ENCODE measurements at regions of chr5 and their contacts with region 1.

Region 1: DNA sequence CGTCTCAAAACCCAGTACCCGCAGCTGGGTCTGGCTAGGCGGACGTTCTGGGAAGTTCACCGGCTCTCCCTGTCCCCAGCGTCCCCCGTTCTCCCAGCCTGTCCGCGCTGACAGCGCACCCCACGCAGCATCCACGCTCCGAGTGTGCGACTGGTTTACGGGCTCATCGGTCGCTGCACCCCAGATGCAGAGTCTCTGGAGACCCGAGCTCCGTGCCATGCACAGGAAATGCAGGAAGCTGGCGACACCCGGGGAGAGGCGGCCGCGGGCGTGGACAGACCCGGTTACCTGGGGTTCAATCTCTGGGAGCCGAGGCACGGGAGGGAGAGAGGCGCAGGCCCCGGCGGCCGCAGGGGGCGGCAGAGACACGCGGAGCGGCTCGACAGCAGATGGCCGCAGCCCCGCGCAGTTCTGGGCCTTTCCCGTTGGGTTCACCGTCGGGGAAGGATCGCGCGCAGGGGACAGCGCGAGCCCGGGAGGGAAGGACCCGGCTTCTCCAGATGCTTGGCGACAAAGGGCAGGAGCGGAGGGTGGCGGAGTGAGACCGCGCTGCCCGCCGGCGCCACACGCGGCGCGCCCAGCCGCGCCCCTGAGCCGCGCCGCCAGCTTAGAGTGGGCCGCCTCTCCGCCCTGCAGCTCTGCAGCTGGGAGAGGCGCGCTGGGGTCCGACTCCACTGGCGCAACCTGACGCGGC is 558 bp downstream of the SHROOM1 start:
- DNase-seq: peak; percentile 67
- H3K4me3 ChIP-seq: peak overlapping the region; percentile 44 to 74 (median 71)
- H3K27ac ChIP-seq: no peak overlapping the region
- H3K4me1 ChIP-seq: peaks cover 5% of the 10 kb centered on the region
- H3K27me3 ChIP-seq: no peaks in the 10 kb centered on the region
- CTCF ChIP-seq: peak; percentile 77 to 97

Region 2: DNA sequence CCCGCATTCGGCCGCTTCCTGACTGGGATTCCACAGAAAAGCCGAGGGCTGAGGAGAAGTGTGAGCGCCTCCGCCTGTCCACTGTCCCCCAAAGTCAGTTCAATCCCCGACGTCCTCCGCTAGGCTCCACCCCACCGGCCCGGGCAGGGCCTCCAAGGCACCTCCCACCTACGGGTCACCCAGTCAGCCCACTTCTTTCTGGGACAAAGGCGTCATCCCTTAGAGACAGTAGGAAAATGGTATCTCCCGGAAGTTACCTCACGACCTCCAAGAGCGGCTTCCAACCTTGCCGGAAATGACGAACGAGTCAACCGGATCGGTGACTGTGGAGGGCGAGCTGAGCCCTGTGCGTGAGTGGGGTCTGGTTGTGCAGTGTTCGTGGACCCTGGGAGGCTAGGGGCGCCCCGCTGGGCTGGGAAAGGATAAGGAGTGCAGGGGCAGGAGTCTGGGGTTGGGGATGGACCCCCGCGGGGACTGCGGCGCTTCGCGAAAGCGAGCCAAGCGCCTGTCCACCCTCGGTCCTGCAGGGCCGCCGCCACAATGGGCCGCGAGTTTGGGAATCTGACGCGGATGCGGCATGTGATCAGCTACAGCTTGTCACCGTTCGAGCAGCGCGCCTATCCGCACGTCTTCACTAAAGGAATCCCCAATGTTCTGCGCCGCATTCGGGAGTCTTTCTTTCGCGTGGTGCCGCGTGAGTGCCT is 36.6 kb after region 1 on chr5 and contains the starts of genes GDF9 and UQCRQ:
- CTCF ChIA-PET with region 1: interaction called, 4 read pairs
- dilution Hi-C with region 1: loop called (anchors 5 kb)
- in situ Hi-C with region 1: loop called in 1 of 2 experiments (anchors 5 kb)
- intact Hi-C with region 1: loop called (anchors 1 kb)
- DNase-seq: peak; percentile 99
- H3K4me3 ChIP-seq: peak within 1 kb of the TSS; percentile 71 to 90 (median 88)
- H3K27ac ChIP-seq: peak within 1 kb of the TSS; percentile 77
- H3K4me1 ChIP-seq: no peaks in the 10 kb centered on the region
- H3K27me3 ChIP-seq: no peaks in the 10 kb centered on the region
- CTCF ChIP-seq: peak in 1 of 2 donors; percentile 50
- total RNA-seq, gene GDF9: 0.50 to 0.66 TPM
- total RNA-seq, gene UQCRQ: 45.3 to 461 TPM

Region 3: DNA sequence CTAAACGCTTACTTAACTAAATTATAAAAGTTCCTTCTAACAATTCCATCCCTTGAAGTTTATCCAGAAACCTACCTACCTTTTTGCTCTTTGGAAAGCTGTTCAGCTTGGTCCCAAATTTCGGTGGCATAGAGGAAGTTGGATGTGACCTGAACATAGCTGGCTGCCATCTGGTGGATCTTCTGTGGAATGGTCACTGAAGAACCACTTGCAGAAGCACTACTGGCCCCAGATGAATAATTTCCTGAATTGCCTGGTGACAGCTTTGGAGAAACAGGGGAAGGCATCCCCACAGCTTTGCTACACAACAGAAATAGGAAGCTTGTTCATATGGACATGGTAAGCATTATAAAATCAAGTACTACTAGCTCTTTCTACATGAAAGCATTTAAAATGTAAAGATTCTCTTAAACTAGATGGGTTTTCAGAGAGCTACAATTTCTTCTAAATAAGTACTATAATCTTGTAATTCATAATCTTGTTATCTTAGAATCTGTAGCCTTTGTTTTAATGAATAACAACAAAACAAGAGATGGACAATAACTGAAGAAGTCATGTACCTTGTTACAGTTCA is 53.5 kb after region 1 on chr5:
- CTCF ChIA-PET with region 1: no interaction called
- dilution Hi-C with region 1: no loop called
- in situ Hi-C with region 1: no loop called
- intact Hi-C with region 1: loop called (anchors 1 kb)
- DNase-seq: peak; percentile 49
- H3K4me3 ChIP-seq: no peak overlapping the region
- H3K27ac ChIP-seq: no peak overlapping the region
- H3K4me1 ChIP-seq: no peaks in the 10 kb centered on the region
- H3K27me3 ChIP-seq: no peaks in the 10 kb centered on the region
- CTCF ChIP-seq: peak; percentile 56 to 69

Region 4: GRCh38 chr5:133032852-133033742 is 203.2 kb after region 1 on chr5:
- CTCF ChIA-PET with region 1: no interaction called
- dilution Hi-C with region 1: no loop called
- in situ Hi-C with region 1: no loop called
- intact Hi-C with region 1: no loop called
- DNase-seq: no peak
- H3K4me3 ChIP-seq: no peak overlapping the region
- H3K27ac ChIP-seq: no peak overlapping the region
- H3K4me1 ChIP-seq: no peaks in the 10 kb centered on the region
- H3K27me3 ChIP-seq: no peaks in the 10 kb centered on the region
- CTCF ChIP-seq: no peak

Measured in mammary epithelial cell (primary cell).